ENCODE measurements at regions of chr9 and their contacts with region 1.

Region 1: GRCh38 chr9:107283626-107284616 is 842 bp downstream of the RAD23B start:
- DNase-seq: peak; percentile 65
- H3K4me3 ChIP-seq: peak overlapping the region; percentile 99
- H3K27ac ChIP-seq: peak overlapping the region; percentile 99
- H3K4me1 ChIP-seq: peaks cover 19% of the 10 kb centered on the region
- H3K27me3 ChIP-seq: no peaks in the 10 kb centered on the region
- CTCF ChIP-seq: no peak

Region 2: GRCh38 chr9:107049046-107049802 is 234.7 kb before region 1 on chr9:
- CTCF ChIA-PET with region 1: no interaction called
- POLR2A ChIA-PET with region 1: no interaction called
- intact Hi-C with region 1: no loop called
- DNase-seq: no peak
- H3K4me3 ChIP-seq: no peak overlapping the region
- H3K27ac ChIP-seq: no peak overlapping the region
- H3K4me1 ChIP-seq: no peaks in the 10 kb centered on the region
- H3K27me3 ChIP-seq: no peaks in the 10 kb centered on the region
- CTCF ChIP-seq: no peak

Region 3: DNA sequence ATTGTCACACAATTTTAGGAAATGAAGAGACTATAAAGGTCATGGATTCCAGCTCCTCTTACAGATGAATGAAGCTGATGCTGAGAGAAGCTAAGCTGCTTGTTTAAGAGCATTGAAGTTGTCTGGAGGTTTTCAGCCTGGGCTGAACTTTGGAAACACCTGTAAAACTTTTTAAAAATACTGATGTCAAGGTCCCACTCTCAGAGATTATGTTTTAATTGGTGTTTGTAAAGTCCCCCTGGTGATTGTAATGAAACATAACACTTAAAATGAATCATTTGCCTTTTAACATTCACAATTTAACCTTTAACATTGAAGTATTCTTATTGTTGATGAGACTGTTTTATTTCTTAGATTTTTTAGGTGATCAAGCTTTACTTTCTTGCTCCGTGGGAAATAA is 15.5 kb after region 1 on chr9:
- CTCF ChIA-PET with region 1: no interaction called
- POLR2A ChIA-PET with region 1: no interaction called
- intact Hi-C with region 1: loop called (anchors 2 kb)
- DNase-seq: no peak
- H3K4me3 ChIP-seq: no peak overlapping the region
- H3K27ac ChIP-seq: no peak overlapping the region
- H3K4me1 ChIP-seq: peaks cover 19% of the 10 kb centered on the region
- H3K27me3 ChIP-seq: no peaks in the 10 kb centered on the region
- CTCF ChIP-seq: no peak

Region 4: GRCh38 chr9:107612136-107612535 is 328.2 kb after region 1 on chr9:
- CTCF ChIA-PET with region 1: no interaction called
- POLR2A ChIA-PET with region 1: no interaction called
- intact Hi-C with region 1: no loop called
- DNase-seq: no peak
- H3K4me3 ChIP-seq: no peak overlapping the region
- H3K27ac ChIP-seq: no peak overlapping the region
- H3K4me1 ChIP-seq: no peaks in the 10 kb centered on the region
- H3K27me3 ChIP-seq: no peaks in the 10 kb centered on the region
- CTCF ChIP-seq: no peak

Measured in A673 (cell line).